Activated B cell treated with CpG ODN at 0.5 μM for 24 hours (primary cell): ENCODE measurements at regions of chr19 and their contacts with region 1.

Region 1: GRCh38 chr19:16143399-16144245 is at the start of gene HSH2D:
- DNase-seq: peak; percentile 82
- ATAC-seq: peak; percentile 71
- H3K4me3 Mint-ChIP-seq: peak within 1 kb of the TSS; percentile 97
- H3K27ac Mint-ChIP-seq: peak within 1 kb of the TSS; percentile 99
- H3K4me1 Mint-ChIP-seq: peaks cover 94% of the 10 kb centered on the region
- H3K27me3 Mint-ChIP-seq: no peaks in the 10 kb centered on the region
- CTCF ChIP-seq: no peak
- total RNA-seq, gene HSH2D: 172 and 191 TPM in 2 replicates

Region 2: DNA sequence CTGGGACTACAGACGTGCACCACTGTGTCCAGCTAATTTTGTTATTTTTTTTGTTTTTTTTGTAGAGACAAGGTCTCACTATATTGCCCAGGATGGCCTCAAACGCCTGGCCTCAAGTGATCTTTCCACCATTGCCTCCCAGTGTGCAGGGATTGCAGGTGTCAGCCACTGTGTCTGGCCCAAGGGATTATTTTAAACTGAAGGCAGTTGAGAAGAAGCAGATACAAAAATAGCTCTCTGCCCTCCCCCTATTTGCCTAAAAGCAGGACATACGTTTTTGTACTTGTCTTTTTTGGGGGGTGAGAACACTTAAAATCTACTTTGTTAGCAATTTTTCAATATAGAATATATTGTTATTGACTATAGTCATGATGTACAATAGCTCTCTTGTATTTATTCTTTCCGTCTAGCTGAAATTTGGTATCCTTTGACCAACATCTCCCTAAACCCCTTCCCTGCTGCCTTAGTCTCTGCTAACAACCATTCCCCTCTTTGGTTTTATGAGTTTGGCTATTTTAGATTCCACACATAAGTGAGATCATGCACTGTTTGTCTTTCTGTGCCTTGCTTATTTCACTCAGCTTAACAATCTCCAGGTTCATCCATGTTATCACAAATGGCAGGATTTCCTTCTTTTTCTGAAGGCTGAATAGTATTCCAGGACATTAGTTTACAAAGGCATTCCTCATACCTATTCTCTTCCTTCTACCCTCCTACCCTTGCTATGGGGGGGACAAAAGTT is 1503.9 kb before region 1 on chr19:
- CTCF ChIA-PET with region 1: no interaction called
- POLR2A ChIA-PET with region 1: interaction called, 12 read pairs
- intact Hi-C with region 1: no loop called
- DNase-seq: no peak
- ATAC-seq: no peak
- H3K4me3 Mint-ChIP-seq: no peak overlapping the region
- H3K27ac Mint-ChIP-seq: no peak overlapping the region
- H3K4me1 Mint-ChIP-seq: peaks cover 14% of the 10 kb centered on the region
- H3K27me3 Mint-ChIP-seq: no peaks in the 10 kb centered on the region
- CTCF ChIP-seq: no peak

Region 3: DNA sequence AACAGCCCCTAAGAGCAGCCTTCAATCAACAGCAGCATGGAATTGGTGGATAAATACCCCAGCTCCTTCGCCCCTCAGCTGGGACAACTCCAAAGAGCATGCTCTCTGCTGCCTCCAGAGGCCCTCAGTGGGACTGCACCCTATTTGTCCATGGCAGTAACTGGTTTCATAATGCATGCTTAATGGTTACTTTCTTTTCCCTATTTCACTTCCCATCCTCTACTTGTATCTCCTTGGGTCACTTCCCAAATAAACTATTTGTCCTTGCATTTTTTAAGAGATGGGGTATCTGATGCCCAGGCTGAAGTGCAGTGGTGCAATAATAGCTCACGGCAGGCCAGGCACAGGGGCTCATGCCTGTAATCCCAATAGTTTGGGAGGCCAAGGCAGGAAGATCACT is 80.8 kb before region 1 on chr19:
- CTCF ChIA-PET with region 1: interaction called, 7 read pairs
- POLR2A ChIA-PET with region 1: interaction called, 3 read pairs
- intact Hi-C with region 1: loop called (anchors 1 kb)
- DNase-seq: peak; percentile 63
- ATAC-seq: peak; percentile 92
- H3K4me3 Mint-ChIP-seq: no peak overlapping the region
- H3K27ac Mint-ChIP-seq: no peak overlapping the region
- H3K4me1 Mint-ChIP-seq: peaks cover 10% of the 10 kb centered on the region
- H3K27me3 Mint-ChIP-seq: peaks cover 3% of the 10 kb centered on the region
- CTCF ChIP-seq: peak; percentile 80

Region 4: DNA sequence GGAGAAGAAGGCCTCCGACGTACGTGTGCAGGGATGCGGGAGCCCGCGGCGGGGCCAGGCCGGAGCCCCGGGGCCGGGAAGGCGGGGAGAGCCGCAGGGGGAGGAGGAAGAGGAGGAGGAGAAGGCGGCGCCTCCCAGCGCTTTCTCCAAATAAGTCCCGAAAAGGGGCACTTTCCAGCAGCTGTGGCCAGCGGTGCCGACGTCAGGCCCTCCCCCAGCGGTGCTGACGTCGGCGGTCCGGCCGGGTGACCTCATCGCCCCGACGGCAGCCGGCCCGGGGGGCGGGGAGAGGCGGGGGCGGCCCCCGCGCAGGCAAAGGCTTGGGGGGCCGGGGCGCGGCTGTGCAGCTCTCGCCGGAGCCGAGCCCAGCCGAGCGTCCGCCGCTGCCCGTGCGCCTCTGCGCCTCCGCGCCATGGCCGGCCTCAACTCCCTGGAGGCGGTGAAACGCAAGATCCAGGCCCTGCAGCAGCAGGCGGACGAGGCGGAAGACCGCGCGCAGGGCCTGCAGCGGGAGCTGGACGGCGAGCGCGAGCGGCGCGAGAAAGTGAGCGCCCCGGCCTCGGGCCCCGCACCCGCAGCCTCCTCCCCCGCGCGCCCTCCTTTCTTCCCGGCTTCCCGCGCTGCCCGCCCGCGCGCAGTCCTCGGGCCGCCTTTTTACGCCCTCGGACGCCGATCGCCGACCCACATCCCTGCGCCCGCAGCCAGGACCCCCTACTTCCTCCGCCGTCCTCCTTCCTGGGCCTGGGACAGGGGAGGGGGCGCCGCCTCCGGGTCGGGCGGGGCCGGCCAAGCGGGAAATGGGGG is 67.3 kb before region 1 on chr19 and contains the start of gene TPM4:
- CTCF ChIA-PET with region 1: interaction called, 3 read pairs
- POLR2A ChIA-PET with region 1: interaction called, 110 read pairs
- intact Hi-C with region 1: loop called (anchors 1 kb)
- DNase-seq: peak; percentile 77
- ATAC-seq: peak; percentile 53
- H3K4me3 Mint-ChIP-seq: peak within 1 kb of the TSS; percentile 90
- H3K27ac Mint-ChIP-seq: peak within 1 kb of the TSS; percentile 98
- H3K4me1 Mint-ChIP-seq: peaks cover 57% of the 10 kb centered on the region
- H3K27me3 Mint-ChIP-seq: no peaks in the 10 kb centered on the region
- CTCF ChIP-seq: no peak
- total RNA-seq, gene TPM4: 238 and 257 TPM in 2 replicates

Region 5: GRCh38 chr19:16118489-16119033 is 25.1 kb before region 1 on chr19:
- CTCF ChIA-PET with region 1: interaction called, 16 read pairs
- POLR2A ChIA-PET with region 1: interaction called, 338 read pairs
- intact Hi-C with region 1: loop called (anchors 1 kb)
- DNase-seq: peak; percentile 76
- ATAC-seq: peak; percentile 87
- H3K4me3 Mint-ChIP-seq: peak overlapping the region; percentile 73
- H3K27ac Mint-ChIP-seq: peak overlapping the region; percentile 98
- H3K4me1 Mint-ChIP-seq: peaks cover 80% of the 10 kb centered on the region
- H3K27me3 Mint-ChIP-seq: no peaks in the 10 kb centered on the region
- CTCF ChIP-seq: no peak

Region 6: DNA sequence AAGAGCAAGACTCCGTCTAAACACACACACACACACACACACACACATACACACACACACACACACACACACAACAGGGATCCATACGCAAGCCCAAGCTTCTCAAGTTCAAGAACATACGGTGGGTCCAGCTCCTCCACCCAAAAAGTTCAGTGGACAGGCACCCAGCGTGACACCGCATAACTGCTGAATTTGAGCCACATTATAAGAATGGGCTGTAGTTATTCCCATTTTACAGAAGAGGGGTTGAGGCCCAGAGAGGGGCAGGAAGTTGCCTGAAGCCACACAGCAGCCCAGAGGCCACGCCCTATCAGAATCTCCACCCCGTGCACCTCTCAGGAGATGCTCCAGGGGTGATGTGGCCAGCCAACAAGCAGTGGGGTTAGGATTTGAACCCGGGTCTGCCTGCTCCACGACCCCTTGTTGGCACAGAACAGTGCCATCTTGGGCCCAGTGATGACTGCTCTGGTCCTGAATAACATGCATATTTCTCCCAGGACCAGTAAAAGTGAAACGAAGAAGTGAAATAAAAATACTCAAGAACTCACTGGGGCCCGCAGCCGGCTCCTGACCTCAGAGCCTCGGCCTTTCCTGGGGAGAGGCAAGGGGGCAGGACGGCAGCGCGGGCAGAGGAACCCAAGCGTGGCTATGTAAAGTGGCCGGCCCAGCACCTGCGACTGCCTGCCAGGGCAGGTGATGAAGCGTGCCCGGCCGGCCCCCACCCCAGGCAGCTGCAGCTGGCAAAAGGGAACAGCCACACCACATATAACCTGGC is 116.0 kb after region 1 on chr19:
- CTCF ChIA-PET with region 1: no interaction called
- POLR2A ChIA-PET with region 1: interaction called, 7 read pairs
- intact Hi-C with region 1: loop called (anchors 5 kb)
- DNase-seq: peak; percentile 78
- ATAC-seq: peak; percentile 75
- H3K4me3 Mint-ChIP-seq: peak overlapping the region; percentile 65
- H3K27ac Mint-ChIP-seq: peak overlapping the region; percentile 93
- H3K4me1 Mint-ChIP-seq: peaks cover 90% of the 10 kb centered on the region
- H3K27me3 Mint-ChIP-seq: no peaks in the 10 kb centered on the region
- CTCF ChIP-seq: no peak

Region 7: DNA sequence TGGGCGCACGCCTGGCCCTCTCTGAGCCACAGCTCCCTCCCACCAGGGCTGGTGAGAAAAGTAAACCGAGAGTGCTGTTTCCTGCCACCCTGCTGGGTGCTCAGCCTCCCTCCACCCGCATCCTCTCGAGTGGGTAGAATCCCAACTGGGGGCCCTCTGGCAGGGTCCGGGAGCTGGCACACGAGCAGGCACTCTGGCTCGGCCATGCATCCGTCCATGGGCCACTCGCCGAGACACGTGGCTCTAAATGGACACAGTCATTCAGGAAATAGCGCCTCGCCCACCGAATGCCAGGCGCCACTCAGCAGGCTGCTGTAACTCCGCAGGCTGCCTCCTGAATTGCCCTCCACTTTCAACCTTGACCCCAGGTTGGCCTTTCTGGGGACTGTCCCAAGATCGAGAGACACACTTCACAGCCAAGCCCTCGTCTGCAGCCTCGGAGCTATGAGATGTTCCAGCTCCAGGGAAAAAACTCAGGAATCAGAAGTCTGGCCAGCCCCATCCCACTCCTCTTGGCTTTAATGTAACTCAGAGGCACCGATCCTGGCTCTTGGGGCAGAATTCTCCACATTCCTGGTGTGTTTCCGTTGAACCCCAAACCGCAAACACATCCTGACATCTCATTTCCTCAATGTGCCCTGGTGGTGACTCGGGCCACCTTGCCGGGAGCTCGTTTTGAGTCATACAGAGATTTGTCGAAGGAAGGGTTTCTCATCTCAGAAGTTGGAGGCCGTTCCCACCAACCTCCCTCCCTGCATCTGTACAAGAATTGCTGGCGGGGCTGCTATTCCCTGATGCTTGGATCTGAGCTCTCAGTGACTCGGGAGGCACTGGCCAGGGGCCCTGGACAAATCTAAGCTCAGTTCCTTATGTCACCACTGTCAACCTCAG is 195.1 kb after region 1 on chr19:
- CTCF ChIA-PET with region 1: no interaction called
- POLR2A ChIA-PET with region 1: interaction called, 9 read pairs
- intact Hi-C with region 1: loop called (anchors 1 kb)
- DNase-seq: no peak
- ATAC-seq: peak; percentile 19
- H3K4me3 Mint-ChIP-seq: peak overlapping the region; percentile 76
- H3K27ac Mint-ChIP-seq: peak overlapping the region; percentile 75
- H3K4me1 Mint-ChIP-seq: peaks cover 64% of the 10 kb centered on the region
- H3K27me3 Mint-ChIP-seq: no peaks in the 10 kb centered on the region
- CTCF ChIP-seq: no peak

Region 8: DNA sequence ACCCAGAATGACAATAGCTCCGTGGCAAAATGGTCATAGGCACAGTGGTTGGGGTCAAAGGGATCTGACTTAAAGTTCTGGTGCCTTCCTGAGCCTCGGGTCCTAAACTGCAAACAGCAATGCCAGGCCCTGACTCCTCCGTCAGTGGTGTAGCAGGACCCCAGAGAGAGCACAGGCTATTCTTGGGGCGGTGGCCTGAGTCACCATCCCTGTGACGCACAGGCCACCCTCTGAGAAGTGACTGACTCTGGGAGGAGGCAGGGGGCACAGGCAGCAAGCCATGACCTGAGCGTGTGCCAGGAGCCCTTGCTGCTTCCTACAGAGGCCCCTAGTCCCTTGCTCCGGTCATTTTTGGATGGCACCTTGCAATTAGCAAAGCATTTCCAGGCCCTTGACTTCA is 1214.8 kb after region 1 on chr19:
- CTCF ChIA-PET with region 1: no interaction called
- POLR2A ChIA-PET with region 1: no interaction called
- intact Hi-C with region 1: no loop called
- DNase-seq: no peak
- ATAC-seq: no peak
- H3K4me3 Mint-ChIP-seq: no peak overlapping the region
- H3K27ac Mint-ChIP-seq: no peak overlapping the region
- H3K4me1 Mint-ChIP-seq: no peaks in the 10 kb centered on the region
- H3K27me3 Mint-ChIP-seq: peaks cover 18% of the 10 kb centered on the region
- CTCF ChIP-seq: no peak